ENCODE measurements at regions of chr2 and their contacts with region 1.

Region 1: GRCh38 chr2:43105586-43106558 is 120.5 kb downstream of the ZFP36L2 start:
- DNase-seq: peak; percentile 77 to 81 (median 80)
- ATAC-seq: peak; percentile 98
- H3K4me3 ChIP-seq: no peak overlapping the region
- H3K27ac ChIP-seq: no peak overlapping the region
- H3K4me1 ChIP-seq: peaks cover 12 to 16% of the 10 kb centered on the region in 2 experiments
- H3K27me3 ChIP-seq: no peaks in the 10 kb centered on the region
- CTCF ChIP-seq: peak; percentile 61 to 82 (median 71)
- EP300 ChIP-seq: no peak
- POLR2A ChIP-seq: no peak
- RAD21 ChIP-seq: peak; percentile 60 to 67

Region 2: DNA sequence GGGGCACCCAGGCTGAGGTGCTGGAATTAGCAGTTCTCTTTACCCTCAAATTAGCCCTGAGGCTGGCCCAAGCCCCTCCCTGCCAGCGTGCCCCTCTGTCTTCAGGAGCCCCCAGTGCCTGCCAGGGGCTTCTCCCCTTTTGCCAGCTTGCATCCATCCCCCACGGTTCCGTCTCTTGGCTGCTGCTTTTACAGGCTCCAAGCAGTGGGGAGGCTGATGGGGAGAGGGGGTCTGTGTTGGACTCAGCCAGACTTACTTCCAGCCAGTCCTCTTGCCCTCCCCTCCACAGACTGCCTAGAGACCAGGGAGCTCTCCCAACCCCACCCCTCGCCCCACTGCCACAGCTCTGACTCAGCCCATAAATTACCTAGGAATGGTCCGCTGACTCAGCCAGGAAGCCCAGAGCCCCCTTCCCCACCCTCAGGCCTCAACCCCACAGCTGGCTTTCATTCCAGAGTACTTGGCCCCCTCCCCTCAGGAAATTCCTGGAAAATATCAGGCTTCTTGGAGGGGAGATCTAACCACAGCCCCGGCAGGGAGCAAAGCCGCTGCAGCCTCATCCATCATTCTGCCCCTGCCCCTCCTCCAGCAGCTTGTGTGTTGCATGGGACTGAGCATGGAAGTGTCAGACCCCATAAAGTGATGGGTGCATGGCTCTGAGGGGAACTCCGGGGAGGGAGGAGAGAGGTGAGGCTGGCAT is 64.1 kb before region 1 on chr2:
- CTCF ChIA-PET with region 1: no interaction called
- POLR2A ChIA-PET with region 1: no interaction called
- in situ Hi-C with region 1: no loop called
- intact Hi-C with region 1: loop called (anchors 1 kb)
- DNase-seq: peak; percentile 73 to 91 (median 83)
- ATAC-seq: peak; percentile 81
- H3K4me3 ChIP-seq: no peak overlapping the region
- H3K27ac ChIP-seq: peak overlapping the region; percentile 62; the same call in 2 of the 3 replicates
- H3K4me1 ChIP-seq: peaks cover 56 to 59% of the 10 kb centered on the region in 2 experiments
- H3K27me3 ChIP-seq: no peaks in the 10 kb centered on the region
- CTCF ChIP-seq: no peak
- EP300 ChIP-seq: peak; percentile 76
- POLR2A ChIP-seq: no peak
- RAD21 ChIP-seq: peak in 1 of 2 experiments; percentile 8; a peak in 1 of 4 replicates

Region 3: GRCh38 chr2:43121580-43122314 is 15.9 kb after region 1 on chr2:
- CTCF ChIA-PET with region 1: no interaction called
- POLR2A ChIA-PET with region 1: no interaction called
- in situ Hi-C with region 1: no loop called
- intact Hi-C with region 1: no loop called
- DNase-seq: no peak
- ATAC-seq: no peak; the same call in 2 of the 3 replicates
- H3K4me3 ChIP-seq: no peak overlapping the region
- H3K27ac ChIP-seq: no peak overlapping the region
- H3K4me1 ChIP-seq: peaks cover 0 to 4% of the 10 kb centered on the region in 2 experiments; a peak in 2 of 5 replicates
- H3K27me3 ChIP-seq: no peaks in the 10 kb centered on the region
- CTCF ChIP-seq: no peak
- EP300 ChIP-seq: no peak
- POLR2A ChIP-seq: no peak
- RAD21 ChIP-seq: no peak